Mammary epithelial cell (primary cell): ENCODE measurements at regions of chr20 and their contacts with region 1.

Region 1: GRCh38 chr20:44467289-44467883 is 8.3 kb upstream of the TTPAL start:
- DNase-seq: peak; percentile 63
- H3K4me3 ChIP-seq: no peak overlapping the region
- H3K27ac ChIP-seq: no peak overlapping the region
- H3K4me1 ChIP-seq: peaks cover 24% of the 10 kb centered on the region
- H3K27me3 ChIP-seq: no peaks in the 10 kb centered on the region
- CTCF ChIP-seq: no peak

Region 2: GRCh38 chr20:44435630-44436335 is 31.6 kb before region 1 on chr20:
- CTCF ChIA-PET with region 1: no interaction called
- dilution Hi-C with region 1: no loop called
- in situ Hi-C with region 1: no loop called
- intact Hi-C with region 1: no loop called
- DNase-seq: no peak
- H3K4me3 ChIP-seq: no peak overlapping the region
- H3K27ac ChIP-seq: no peak overlapping the region
- H3K4me1 ChIP-seq: no peaks in the 10 kb centered on the region
- H3K27me3 ChIP-seq: no peaks in the 10 kb centered on the region
- CTCF ChIP-seq: no peak

Region 3: DNA sequence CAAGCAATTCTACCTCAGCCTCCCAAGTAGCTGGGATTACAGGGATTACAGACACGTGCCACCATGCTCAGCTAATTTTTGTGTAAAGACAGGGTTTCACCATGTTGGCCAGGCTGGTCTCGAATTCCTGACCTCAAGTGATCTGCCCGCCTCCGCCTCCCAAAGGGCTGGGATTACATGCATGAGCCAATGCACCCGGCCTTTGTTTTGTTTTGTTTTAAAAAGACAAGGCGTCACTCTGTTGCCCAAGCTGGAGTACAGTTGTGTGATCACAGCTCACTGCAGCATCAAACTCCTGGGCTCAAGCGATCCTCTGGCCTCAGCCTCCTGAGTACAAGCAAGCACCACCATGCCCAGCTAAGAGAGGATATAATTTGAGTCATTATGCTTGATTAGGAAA is 49.1 kb after region 1 on chr20:
- CTCF ChIA-PET with region 1: no interaction called
- dilution Hi-C with region 1: loop called (anchors 5 kb)
- in situ Hi-C with region 1: no loop called
- intact Hi-C with region 1: no loop called
- DNase-seq: no peak
- H3K4me3 ChIP-seq: no peak overlapping the region
- H3K27ac ChIP-seq: no peak overlapping the region
- H3K4me1 ChIP-seq: peaks cover 16% of the 10 kb centered on the region
- H3K27me3 ChIP-seq: no peaks in the 10 kb centered on the region
- CTCF ChIP-seq: no peak

Region 4: GRCh38 chr20:44552950-44553908 is 85.8 kb after region 1 on chr20:
- CTCF ChIA-PET with region 1: no interaction called
- dilution Hi-C with region 1: no loop called
- in situ Hi-C with region 1: no loop called
- intact Hi-C with region 1: no loop called
- DNase-seq: peak; percentile 55
- H3K4me3 ChIP-seq: no peak overlapping the region
- H3K27ac ChIP-seq: no peak overlapping the region
- H3K4me1 ChIP-seq: peaks cover 9% of the 10 kb centered on the region
- H3K27me3 ChIP-seq: no peaks in the 10 kb centered on the region
- CTCF ChIP-seq: no peak